Ascending aorta (tissue), 2 donors: ENCODE measurements at regions of chr9 and their contacts with region 1.

Region 1: DNA sequence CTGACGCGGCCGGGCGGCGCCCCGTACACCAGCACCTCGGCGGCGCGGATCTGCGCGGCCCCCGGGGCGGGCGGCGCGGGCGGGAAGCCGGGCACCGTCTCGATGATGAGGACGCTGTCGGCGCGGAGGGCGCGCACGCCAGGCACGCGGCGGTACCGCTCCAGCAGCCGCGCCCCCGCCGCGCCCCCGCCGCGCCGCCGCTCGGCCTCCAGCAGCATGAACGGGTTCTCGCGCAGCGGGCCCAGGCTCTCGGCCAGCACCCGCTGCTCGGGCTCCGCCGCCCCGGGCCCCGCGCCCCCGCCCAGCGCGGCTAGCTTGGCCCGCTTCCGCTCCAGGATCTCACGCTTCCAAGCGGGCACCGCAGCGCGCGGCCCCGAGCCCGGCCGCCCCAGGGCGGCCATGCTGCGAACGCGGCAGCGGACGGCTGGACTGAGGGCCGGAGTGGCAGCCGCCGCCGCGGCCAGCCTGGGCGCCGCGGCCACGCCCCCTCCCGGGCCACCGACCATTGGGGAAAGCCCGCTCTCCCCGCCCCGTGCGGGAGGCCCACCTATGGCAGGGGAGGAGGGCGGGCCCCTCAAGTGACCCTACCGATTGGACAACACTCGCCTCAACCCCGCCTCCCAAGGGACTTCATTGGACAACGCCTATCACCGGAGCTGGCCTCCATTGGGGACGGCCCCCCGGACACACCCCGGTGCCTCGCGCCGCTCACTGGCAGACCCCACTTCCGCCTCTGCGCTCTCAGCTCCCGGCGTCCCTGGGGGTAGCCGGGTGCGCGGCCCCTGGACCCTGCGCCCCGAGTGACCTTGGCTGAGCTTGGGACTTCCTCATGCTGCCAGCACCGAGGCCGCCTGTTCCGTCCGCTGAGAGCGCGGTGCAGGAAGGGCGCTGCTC is at the start of gene TPRN:
- DNase-seq: peak; percentile 99 to 100
- H3K4me3 ChIP-seq: peak within 1 kb of the TSS; percentile 77 to 80
- H3K27ac ChIP-seq: peak within 1 kb of the TSS; percentile 73 to 75
- H3K4me1 ChIP-seq: peaks cover 20 to 45% of the 10 kb centered on the region in 2 donors
- H3K27me3 ChIP-seq: no peaks in the 10 kb centered on the region
- CTCF ChIP-seq: peak in 1 of 3 experiments; percentile 29
- total RNA-seq, gene TPRN: 2.8 TPM

Region 2: GRCh38 chr9:137129456-137130175 is 70.9 kb before region 1 on chr9:
- intact Hi-C with region 1: no loop called
- DNase-seq: peak; percentile 34 to 89
- H3K4me3 ChIP-seq: peak overlapping the region; percentile 73 to 81
- H3K27ac ChIP-seq: peak overlapping the region; percentile 54 to 70
- H3K4me1 ChIP-seq: peaks cover 7 to 12% of the 10 kb centered on the region in 2 donors
- H3K27me3 ChIP-seq: no peaks in the 10 kb centered on the region
- CTCF ChIP-seq: no peak

Region 3: DNA sequence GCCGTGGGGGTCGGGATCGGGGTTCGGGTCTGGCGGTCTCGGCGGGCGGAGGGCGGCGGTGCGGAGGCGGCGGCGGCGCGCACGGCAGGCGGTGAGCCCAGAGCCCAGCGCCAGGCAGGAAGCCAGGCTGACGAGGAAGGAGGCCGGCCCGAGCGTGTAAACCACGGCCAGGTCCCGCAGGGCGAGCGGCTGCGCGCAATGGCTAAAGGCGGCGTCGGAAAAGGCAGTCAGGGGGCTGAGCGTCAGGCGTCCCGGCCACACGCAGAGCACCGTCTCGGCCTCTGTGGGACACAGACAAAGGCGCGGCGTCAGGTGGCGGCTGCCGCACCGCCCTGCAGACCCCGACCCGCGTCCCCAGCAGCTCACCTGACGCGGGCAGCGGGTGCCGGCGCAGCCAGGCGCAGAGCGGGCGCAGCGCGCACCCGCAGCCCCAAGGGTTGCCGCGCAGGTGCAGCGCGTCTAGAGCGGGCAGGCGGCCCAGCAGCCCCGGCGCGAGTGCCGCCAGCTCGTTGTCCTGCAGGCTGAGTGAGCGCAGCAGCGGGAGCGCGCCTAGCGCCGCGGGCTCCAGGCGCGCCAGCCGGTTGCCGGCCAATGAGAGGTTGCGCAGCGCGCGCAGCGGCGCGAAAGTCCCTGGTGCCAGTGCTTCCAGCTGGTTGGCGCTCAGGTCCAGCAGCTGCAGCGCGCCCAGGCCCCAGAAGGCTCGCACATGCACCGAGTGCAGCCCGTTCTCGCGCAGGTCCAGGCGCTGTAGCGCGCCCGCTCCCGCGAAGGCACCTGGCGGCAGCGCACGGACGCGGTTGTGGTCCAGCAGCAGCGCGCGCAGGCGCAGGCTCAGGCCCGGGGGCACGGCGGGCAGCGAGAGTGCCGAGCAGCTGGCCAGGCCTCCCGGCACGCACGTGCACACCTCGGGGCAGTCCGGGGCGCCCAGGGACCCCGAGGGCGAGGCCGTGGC is 31.4 kb before region 1 on chr9:
- intact Hi-C with region 1: no loop called
- DNase-seq: no peak
- H3K4me3 ChIP-seq: peak overlapping the region; percentile 38 to 60
- H3K27ac ChIP-seq: no peak overlapping the region
- H3K4me1 ChIP-seq: peaks cover 11 to 15% of the 10 kb centered on the region in 2 donors
- H3K27me3 ChIP-seq: peaks cover 33% of the 10 kb centered on the region
- CTCF ChIP-seq: no peak

Region 4: DNA sequence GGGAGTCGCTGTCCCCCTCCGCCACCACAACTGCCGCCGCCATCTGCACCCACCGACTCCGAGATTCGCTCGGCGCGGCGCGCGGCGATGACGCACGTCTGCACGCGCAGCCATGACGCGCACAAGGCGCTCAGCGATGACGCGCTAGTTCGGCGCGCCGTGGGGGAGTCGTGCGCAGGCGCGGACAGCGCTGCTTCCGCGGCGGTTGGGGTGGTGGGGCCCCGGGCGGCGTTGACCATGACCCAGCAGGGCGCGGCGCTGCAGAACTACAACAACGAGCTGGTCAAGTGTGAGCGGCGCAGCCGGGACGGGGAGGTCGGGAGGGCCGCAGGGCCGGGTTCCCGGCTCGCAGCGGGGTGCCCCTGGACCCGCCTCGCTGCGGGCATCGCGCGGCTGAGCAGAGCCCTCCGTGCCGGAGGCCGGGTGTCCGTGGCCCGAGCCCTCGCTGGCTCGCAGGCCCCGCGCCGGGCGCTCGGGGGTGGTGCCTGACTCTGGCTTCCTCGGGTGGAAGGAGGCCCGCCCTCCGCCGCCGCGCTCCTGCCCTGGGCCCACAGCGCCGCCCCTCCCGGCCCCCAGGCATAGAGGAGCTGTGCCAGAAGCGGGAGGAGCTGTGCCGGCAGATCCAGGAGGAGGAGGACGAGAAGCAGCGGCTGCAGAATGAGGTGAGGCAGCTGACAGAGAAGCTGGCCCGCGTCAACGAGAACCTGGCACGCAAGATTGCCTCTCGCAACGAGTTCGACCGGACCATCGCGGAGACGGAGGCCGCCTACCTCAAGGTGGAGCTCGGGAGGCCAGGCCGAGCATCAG is 11.9 kb before region 1 on chr9 and contains the starts of genes ANAPC2 and SSNA1:
- intact Hi-C with region 1: loop called (anchors 1 kb)
- DNase-seq: peak; percentile 70 to 95
- H3K4me3 ChIP-seq: peak within 1 kb of the TSS; percentile 85 to 91
- H3K27ac ChIP-seq: peak within 1 kb of the TSS; percentile 86 to 89
- H3K4me1 ChIP-seq: peaks cover 23 to 38% of the 10 kb centered on the region in 2 donors
- H3K27me3 ChIP-seq: no peaks in the 10 kb centered on the region
- CTCF ChIP-seq: peak in 2 of 3 experiments; percentile 15 to 35
- total RNA-seq, gene ANAPC2: 24.1 TPM
- total RNA-seq, gene SSNA1: 123 TPM

Region 5: DNA sequence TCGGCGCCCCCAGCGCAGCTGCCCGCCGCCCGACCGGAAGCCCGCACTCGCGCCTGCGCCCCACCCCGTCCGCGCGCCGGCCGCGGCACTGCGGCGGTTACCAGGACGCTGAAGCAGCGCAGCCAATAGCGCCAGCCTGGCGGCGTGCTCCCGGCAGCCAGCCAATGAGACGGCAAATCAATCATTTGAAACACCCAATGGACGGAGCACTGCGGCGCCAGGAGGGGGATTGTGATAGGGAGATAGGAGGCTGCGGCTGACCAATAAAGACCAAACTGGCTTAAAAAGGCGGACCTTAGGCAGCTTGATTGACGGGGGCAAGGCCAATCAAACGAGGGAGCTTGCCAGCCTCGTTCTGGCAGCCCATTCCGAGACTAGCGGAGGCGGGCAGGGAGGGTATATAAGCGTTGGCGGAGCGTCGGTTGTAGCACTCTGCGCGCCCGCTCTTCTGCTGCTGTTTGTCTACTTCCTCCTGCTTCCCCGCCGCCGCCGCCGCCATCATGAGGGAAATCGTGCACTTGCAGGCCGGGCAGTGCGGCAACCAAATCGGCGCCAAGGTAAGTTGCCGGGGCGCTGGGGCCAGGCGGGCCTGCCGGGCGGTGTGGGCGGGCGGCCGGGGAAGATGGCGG is 40.4 kb after region 1 on chr9 and contains the start of gene TUBB4B:
- intact Hi-C with region 1: loop called (anchors 1 kb)
- DNase-seq: peak; percentile 99 to 100
- H3K4me3 ChIP-seq: peak within 1 kb of the TSS; percentile 81 to 93
- H3K27ac ChIP-seq: peak within 1 kb of the TSS; percentile 88 to 90
- H3K4me1 ChIP-seq: peaks cover 13 to 28% of the 10 kb centered on the region in 2 donors
- H3K27me3 ChIP-seq: no peaks in the 10 kb centered on the region
- CTCF ChIP-seq: peak in 1 of 3 experiments; percentile 33
- total RNA-seq, gene TUBB4B: 403 TPM

Region 6: GRCh38 chr9:137269231-137269772 is 68.7 kb after region 1 on chr9:
- intact Hi-C with region 1: loop called (anchors 2 kb)
- DNase-seq: peak; percentile 36 to 84
- H3K4me3 ChIP-seq: peak overlapping the region; percentile 25 to 29
- H3K27ac ChIP-seq: peak overlapping the region; percentile 66 to 83
- H3K4me1 ChIP-seq: peaks cover 10 to 23% of the 10 kb centered on the region in 2 donors
- H3K27me3 ChIP-seq: no peaks in the 10 kb centered on the region
- CTCF ChIP-seq: no peak

Region 7: DNA sequence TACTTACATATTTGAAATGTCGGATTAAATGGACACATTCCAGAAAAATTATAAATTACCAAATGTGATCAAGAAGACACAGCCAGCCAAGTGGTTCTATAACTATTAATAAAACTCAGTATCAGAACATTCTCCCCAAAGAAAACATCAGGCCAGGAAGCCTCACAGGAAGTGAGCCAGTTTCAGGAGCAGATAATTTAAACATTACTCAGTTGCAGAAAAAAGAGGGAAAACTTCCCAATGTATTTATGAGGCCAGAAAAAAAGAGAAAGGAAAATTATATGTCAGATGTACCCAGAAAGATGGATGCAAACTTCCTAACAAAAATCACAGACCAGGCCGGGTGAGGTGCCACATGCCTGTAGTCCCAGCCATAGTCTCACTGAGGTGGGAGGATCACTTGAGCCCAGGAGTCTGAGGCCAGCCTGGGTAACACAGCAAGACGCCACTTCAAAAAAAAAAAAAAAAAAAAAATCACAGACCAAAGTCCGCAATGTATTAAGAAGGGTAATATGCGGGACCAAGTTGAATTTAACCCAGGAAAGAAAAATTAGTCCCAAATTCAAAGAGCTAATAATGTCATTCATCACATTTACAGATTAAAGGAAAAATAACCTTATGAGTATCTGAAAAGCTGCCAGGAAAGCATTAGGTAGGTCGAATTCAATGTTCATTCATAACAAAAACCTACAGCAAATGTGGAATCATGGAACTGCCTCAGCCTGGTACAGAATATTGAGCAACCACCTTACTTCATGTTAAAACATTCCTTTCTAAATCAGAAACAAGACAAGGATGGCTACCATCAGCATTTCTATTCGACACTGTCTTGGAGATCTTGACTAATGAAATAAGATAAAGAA is 138.7 kb after region 1 on chr9:
- intact Hi-C with region 1: no loop called
- DNase-seq: no peak
- H3K4me3 ChIP-seq: no peak overlapping the region
- H3K27ac ChIP-seq: no peak overlapping the region
- H3K4me1 ChIP-seq: no peaks in the 10 kb centered on the region
- H3K27me3 ChIP-seq: no peaks in the 10 kb centered on the region
- CTCF ChIP-seq: no peak

Region 8: GRCh38 chr9:137405677-137406416 is 205.3 kb after region 1 on chr9:
- intact Hi-C with region 1: no loop called
- DNase-seq: no peak
- H3K4me3 ChIP-seq: peak overlapping the region in 1 of 2 donors; percentile 66
- H3K27ac ChIP-seq: no peak overlapping the region
- H3K4me1 ChIP-seq: peaks cover 7 to 13% of the 10 kb centered on the region in 2 donors
- H3K27me3 ChIP-seq: no peaks in the 10 kb centered on the region
- CTCF ChIP-seq: no peak